ENCODE measurements at regions of chr1 and their contacts with region 1.

Region 1: GRCh38 chr1:172745014-172745413 is 86.1 kb downstream of the FASLG start:
- DNase-seq: peak; percentile 28
- H3K4me3 ChIP-seq: no peak overlapping the region
- H3K27ac ChIP-seq: peak overlapping the region in 1 of 2 donors; percentile 60
- H3K4me1 ChIP-seq: no peaks in the 10 kb centered on the region
- H3K27me3 ChIP-seq: no peaks in the 10 kb centered on the region
- CTCF ChIP-seq: peak; percentile 18 to 69 (median 48)
- POLR2A ChIP-seq: no peak

Region 2: DNA sequence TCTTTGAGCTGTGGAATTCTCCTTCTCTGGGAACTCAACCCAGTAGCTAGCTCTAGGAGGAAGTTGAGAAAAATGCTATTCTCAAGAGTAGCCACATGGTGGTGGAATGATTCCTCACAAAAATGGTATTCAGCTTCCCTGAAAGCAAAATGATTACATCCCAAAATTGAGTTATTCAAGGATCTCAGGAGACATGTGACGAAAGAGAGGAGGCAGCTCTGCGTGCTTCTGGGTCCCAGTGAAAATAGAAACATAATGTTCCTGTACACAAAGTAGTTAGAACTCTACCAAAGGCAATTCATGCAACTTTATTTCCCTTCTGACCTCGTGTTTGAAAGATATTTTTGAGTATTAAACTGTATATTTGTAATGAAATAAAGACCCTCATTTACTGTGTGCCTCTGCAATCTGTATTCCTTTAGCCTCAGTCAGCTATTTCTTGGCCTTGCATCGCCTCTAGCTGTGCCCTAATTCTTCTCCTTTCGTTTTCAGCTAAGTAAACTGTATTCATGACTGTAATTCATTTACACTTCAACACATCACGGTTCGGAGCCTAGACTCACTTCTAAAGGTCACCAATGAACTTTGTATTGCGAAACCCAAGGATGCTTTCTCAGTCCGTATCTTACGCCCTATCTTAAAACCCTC is 81.2 kb after region 1 on chr1:
- intact Hi-C with region 1: loop called (anchors 10 kb)
- DNase-seq: no peak
- H3K4me3 ChIP-seq: no peak overlapping the region
- H3K27ac ChIP-seq: no peak overlapping the region
- H3K4me1 ChIP-seq: no peaks in the 10 kb centered on the region
- H3K27me3 ChIP-seq: no peaks in the 10 kb centered on the region
- CTCF ChIP-seq: peak in 3 of 4 experiments; percentile 50 to 71 (median 64)
- POLR2A ChIP-seq: no peak

Region 3: DNA sequence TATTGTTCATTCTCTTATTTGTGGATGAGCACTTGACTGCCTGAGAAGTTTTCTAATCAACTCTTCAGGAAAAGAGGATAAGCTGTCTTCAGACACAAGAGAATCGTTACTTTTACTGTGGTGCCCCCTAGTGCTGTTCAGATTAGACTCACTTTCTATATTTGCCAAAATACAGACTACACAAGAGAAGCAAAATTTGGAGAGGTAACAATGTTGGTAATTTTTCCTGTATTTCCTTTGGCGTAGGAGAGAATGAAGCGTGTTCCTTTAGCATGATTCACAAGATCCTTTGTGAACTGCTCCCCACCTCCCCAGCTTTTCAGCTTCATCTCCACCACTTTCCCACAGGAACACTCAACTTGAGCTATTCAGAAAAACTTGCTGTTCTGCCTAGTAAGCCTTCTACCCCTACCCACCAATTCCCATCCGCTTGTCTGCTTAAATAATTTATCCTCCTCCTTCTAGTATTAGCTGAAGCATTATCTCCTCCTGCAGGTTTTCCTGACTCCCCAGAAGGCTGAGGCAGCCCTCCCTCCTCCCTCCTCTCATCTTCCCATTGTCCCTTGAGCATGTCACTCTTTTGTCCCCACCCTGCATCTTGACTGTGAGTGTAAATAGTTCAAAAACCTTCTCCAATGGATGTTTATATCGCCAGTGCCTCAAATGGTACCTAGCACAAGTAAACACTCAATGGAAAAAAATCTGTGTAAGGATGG is 457.6 kb after region 1 on chr1:
- intact Hi-C with region 1: loop called (anchors 5 kb)
- DNase-seq: peak; percentile 41
- H3K4me3 ChIP-seq: no peak overlapping the region
- H3K27ac ChIP-seq: no peak overlapping the region
- H3K4me1 ChIP-seq: no peaks in the 10 kb centered on the region
- H3K27me3 ChIP-seq: no peaks in the 10 kb centered on the region
- CTCF ChIP-seq: peak; percentile 35 to 82 (median 61)
- POLR2A ChIP-seq: no peak

Region 4: DNA sequence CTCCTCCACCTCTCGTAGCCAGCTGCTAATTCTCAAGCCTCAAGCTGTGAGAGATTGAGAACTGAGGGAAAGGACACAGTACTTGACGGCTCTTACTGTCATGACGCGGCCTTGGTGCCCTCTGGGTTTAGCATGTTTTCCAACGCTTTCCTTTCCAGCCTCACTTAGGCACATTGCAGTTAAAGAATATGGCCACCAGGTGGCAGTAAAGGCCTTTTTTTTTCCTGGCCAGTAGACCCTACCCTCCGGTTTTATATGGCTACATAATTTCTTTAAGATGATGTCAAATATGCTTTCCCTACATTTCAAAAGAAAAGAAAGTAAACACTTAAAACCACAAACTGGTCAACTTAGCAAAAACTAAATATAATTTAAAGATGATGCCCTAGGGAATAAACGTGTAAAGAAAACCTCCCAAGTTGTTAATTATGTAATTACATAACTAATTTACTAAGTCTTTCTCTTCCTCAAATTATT is 675.4 kb after region 1 on chr1:
- intact Hi-C with region 1: loop called (anchors 5 kb)
- DNase-seq: peak; percentile 45
- H3K4me3 ChIP-seq: no peak overlapping the region
- H3K27ac ChIP-seq: no peak overlapping the region
- H3K4me1 ChIP-seq: no peaks in the 10 kb centered on the region
- H3K27me3 ChIP-seq: no peaks in the 10 kb centered on the region
- CTCF ChIP-seq: peak; percentile 80 to 93 (median 88)
- POLR2A ChIP-seq: no peak

Region 5: GRCh38 chr1:173824331-173825081 is 1079.5 kb after region 1 on chr1 and contains the starts of genes CENPL and DARS2:
- intact Hi-C with region 1: loop called (anchors 10 kb)
- DNase-seq: peak; percentile 96
- H3K4me3 ChIP-seq: peak within 1 kb of the TSS; percentile 55 to 62
- H3K27ac ChIP-seq: peak within 1 kb of the TSS; percentile 87 to 91
- H3K4me1 ChIP-seq: no peaks in the 10 kb centered on the region
- H3K27me3 ChIP-seq: no peaks in the 10 kb centered on the region
- CTCF ChIP-seq: no peak
- POLR2A ChIP-seq: peak; percentile 13
- total RNA-seq, gene CENPL: 5.7 to 9.4 TPM
- total RNA-seq, gene DARS2: 11.3 to 18.1 TPM

Measured in prostate gland (tissue), 2 donors.